Activated B cell treated with CpG ODN at 0.5 μM for 24 hours (primary cell): ENCODE measurements at regions of chr5 and their contacts with region 1.

Region 1: DNA sequence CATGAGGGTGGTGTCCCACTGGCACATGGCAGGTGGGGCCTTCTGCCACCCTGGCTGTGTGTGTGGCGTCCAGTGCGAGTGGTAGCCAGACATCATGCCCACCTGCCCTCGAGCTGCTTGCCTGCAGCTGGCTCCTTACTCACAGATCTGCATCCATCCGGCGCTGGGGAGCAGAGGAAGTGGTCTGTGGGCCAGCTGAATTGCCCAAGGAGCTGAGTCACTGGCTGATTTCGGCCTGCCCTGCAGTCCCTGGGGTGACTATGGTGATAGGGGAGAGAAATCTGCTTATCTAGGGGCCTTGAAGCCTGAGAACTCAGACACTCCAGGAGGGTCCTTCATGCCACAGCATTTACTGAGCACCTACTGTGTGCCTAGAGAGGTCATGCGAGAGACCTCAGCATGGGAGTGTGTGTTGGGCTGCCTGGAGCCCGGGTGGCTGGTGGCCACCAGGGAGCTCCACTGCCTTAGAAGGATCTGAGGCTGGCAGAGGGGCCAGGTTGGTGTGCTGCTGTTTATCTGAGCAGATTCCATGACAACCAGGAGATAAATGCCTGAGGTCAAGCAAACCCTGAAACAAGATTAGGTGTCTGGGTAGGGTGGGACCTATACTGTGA is 57.1 kb downstream of the SLC22A5 start:
- DNase-seq: peak; percentile 60
- ATAC-seq: peak; percentile 44
- H3K4me3 Mint-ChIP-seq: peak overlapping the region; percentile 62
- H3K27ac Mint-ChIP-seq: peak overlapping the region; percentile 91
- H3K4me1 Mint-ChIP-seq: peaks cover 100% of the 10 kb centered on the region
- H3K27me3 Mint-ChIP-seq: no peaks in the 10 kb centered on the region
- CTCF ChIP-seq: no peak

Region 2: GRCh38 chr5:132354381-132355139 is 72.1 kb before region 1 on chr5:
- CTCF ChIA-PET with region 1: no interaction called
- POLR2A ChIA-PET with region 1: interaction called, 5 read pairs
- intact Hi-C with region 1: loop called (anchors 2 kb)
- DNase-seq: no peak
- ATAC-seq: no peak
- H3K4me3 Mint-ChIP-seq: peak overlapping the region; percentile 24
- H3K27ac Mint-ChIP-seq: peak overlapping the region; percentile 31
- H3K4me1 Mint-ChIP-seq: peaks cover 19% of the 10 kb centered on the region
- H3K27me3 Mint-ChIP-seq: no peaks in the 10 kb centered on the region
- CTCF ChIP-seq: no peak

Region 3: GRCh38 chr5:132437604-132438266 is 11.1 kb after region 1 on chr5:
- CTCF ChIA-PET with region 1: interaction called, 6 read pairs
- POLR2A ChIA-PET with region 1: interaction called, 39 read pairs
- intact Hi-C with region 1: loop called (anchors 1 kb)
- DNase-seq: no peak
- ATAC-seq: peak; percentile 96
- H3K4me3 Mint-ChIP-seq: peak overlapping the region; percentile 48
- H3K27ac Mint-ChIP-seq: peak overlapping the region; percentile 74
- H3K4me1 Mint-ChIP-seq: peaks cover 60% of the 10 kb centered on the region
- H3K27me3 Mint-ChIP-seq: no peaks in the 10 kb centered on the region
- CTCF ChIP-seq: no peak

Region 4: DNA sequence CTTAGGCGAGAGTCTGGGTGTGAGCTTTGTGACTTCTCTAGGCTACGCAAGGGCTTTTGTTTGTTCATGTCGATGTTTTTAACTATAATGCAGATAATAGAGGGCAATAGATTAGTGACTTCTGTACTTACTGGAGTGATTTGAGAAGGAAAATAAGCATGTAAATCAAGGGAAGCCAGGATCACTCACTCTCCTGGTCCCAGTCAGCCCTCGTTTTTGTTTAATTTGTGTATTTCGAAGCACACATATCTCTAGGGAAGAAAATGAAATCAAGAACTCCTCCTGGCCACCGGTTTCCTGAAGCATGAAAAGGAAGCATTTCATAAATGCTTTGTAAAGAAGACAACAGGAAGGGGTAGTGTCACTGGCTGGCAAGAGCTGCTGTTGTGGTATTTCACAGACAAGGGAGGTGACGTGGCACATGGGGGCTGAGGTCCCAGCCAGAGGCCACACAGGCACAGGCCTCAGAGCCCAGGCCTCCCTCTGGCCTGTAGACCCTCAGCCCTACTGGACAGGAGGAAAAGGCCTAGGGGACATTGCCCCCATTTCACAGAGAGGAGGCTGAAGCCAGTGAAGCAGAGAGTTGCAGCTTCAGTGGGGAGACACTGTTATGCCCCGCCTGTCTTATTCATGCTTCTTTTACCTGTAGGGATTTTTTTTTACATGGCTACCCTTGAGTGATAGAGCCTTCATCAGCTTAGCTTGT is 29.8 kb after region 1 on chr5:
- CTCF ChIA-PET with region 1: interaction called, 16 read pairs
- POLR2A ChIA-PET with region 1: interaction called, 150 read pairs
- intact Hi-C with region 1: loop called (anchors 1 kb)
- DNase-seq: peak; percentile 56
- ATAC-seq: peak; percentile 78
- H3K4me3 Mint-ChIP-seq: peak overlapping the region; percentile 75
- H3K27ac Mint-ChIP-seq: peak overlapping the region; percentile 99
- H3K4me1 Mint-ChIP-seq: peaks cover 92% of the 10 kb centered on the region
- H3K27me3 Mint-ChIP-seq: no peaks in the 10 kb centered on the region
- CTCF ChIP-seq: no peak

Region 5: GRCh38 chr5:132466433-132467286 is 40.0 kb after region 1 on chr5:
- CTCF ChIA-PET with region 1: interaction called, 18 read pairs
- POLR2A ChIA-PET with region 1: interaction called, 71 read pairs
- intact Hi-C with region 1: loop called (anchors 2 kb)
- DNase-seq: peak; percentile 44
- ATAC-seq: peak; percentile 64
- H3K4me3 Mint-ChIP-seq: peak overlapping the region; percentile 55
- H3K27ac Mint-ChIP-seq: peak overlapping the region; percentile 54
- H3K4me1 Mint-ChIP-seq: peaks cover 92% of the 10 kb centered on the region
- H3K27me3 Mint-ChIP-seq: no peaks in the 10 kb centered on the region
- CTCF ChIP-seq: no peak

Region 6: GRCh38 chr5:132473019-132473531 is 46.4 kb after region 1 on chr5:
- CTCF ChIA-PET with region 1: interaction called, 18 read pairs
- POLR2A ChIA-PET with region 1: interaction called, 159 read pairs
- intact Hi-C with region 1: loop called (anchors 1 kb)
- DNase-seq: peak; percentile 50
- ATAC-seq: peak; percentile 87
- H3K4me3 Mint-ChIP-seq: peak overlapping the region; percentile 50
- H3K27ac Mint-ChIP-seq: peak overlapping the region; percentile 91
- H3K4me1 Mint-ChIP-seq: peaks cover 78% of the 10 kb centered on the region
- H3K27me3 Mint-ChIP-seq: no peaks in the 10 kb centered on the region
- CTCF ChIP-seq: no peak

Region 7: DNA sequence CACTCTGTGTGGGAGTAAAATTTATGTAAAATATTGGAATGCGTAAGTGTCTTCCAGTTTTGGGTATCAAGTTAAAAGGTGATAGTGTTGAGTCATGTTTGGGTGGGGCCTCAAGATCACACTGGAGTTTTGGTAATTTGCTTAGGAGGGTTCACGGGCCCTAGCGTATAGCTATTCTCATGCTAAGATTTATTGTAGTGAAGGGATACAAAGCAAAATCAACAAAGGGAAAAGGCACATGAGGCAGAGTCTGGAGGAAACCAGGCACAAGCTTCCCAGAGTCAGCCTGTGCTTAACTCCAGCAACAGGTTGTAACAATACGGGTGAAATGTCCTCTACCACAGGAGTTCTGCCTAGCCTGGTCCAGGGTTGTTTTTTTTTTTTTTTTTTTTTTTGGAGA is 645.4 kb after region 1 on chr5:
- CTCF ChIA-PET with region 1: no interaction called
- POLR2A ChIA-PET with region 1: no interaction called
- intact Hi-C with region 1: no loop called
- DNase-seq: no peak
- ATAC-seq: no peak
- H3K4me3 Mint-ChIP-seq: no peak overlapping the region
- H3K27ac Mint-ChIP-seq: no peak overlapping the region
- H3K4me1 Mint-ChIP-seq: peaks cover 5% of the 10 kb centered on the region
- H3K27me3 Mint-ChIP-seq: no peaks in the 10 kb centered on the region
- CTCF ChIP-seq: no peak